CD14-positive monocyte (primary cell): ENCODE measurements at regions of chr12 and their contacts with region 1.

Region 1: DNA sequence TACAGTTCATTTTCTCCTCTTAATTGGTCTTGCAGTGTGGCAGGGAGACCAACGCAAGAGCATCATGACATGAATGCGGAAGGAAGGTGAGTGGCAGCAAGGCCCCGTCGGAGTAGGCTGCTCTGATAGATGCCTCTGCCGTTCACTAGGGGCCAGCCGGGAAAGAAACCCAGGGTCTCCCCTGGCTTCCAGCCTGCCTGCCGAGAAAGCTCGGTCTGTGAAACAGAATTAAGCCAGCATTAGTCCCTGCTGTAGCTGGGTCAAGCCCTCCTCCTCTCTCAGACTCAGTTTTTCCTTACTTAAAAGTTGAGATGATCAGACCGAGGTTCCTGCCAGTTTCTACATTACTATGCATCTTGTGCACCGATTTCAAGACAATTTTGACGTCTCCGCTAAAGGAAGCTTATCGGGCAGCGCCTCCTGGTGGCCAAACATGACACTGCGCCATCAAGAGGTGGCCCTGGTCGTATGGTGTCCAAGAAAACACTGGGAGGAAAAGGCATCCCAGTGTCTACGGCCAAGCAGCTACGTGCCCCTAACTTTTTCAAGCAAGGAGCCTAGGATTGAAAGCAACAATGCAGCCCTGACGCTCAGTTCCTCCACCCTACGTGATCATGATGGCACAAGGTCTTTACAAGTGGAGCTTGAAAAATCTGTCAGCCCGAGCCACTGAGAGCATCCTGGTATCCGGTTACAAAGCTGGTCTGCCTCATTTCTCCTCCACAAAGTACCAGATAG is 131.6 kb downstream of the KSR2 start:
- DNase-seq: peak; percentile 18 to 50 (median 48)
- H3K4me3 ChIP-seq: no peak overlapping the region
- H3K4me3 Mint-ChIP-seq: no peak overlapping the region
- H3K27ac ChIP-seq: no peak overlapping the region
- H3K27ac Mint-ChIP-seq: no peak overlapping the region
- H3K4me1 ChIP-seq: no peaks in the 10 kb centered on the region
- H3K4me1 Mint-ChIP-seq: peaks cover 2% of the 10 kb centered on the region
- H3K27me3 ChIP-seq: no peaks in the 10 kb centered on the region
- H3K27me3 Mint-ChIP-seq: peaks cover 0 to 7% (median 2%) of the 10 kb centered on the region in 3 donors
- CTCF ChIP-seq: peak; percentile 96

Region 2: GRCh38 chr12:117212563-117213190 is 624.5 kb before region 1 on chr12:
- intact Hi-C with region 1: loop called (anchors 5 kb)
- DNase-seq: peak; percentile 17 to 49 (median 32)
- H3K4me3 ChIP-seq: no peak overlapping the region
- H3K4me3 Mint-ChIP-seq: no peak overlapping the region
- H3K27ac ChIP-seq: no peak overlapping the region
- H3K27ac Mint-ChIP-seq: no peak overlapping the region
- H3K4me1 ChIP-seq: no peaks in the 10 kb centered on the region
- H3K4me1 Mint-ChIP-seq: no peaks in the 10 kb centered on the region
- H3K27me3 ChIP-seq: no peaks in the 10 kb centered on the region
- H3K27me3 Mint-ChIP-seq: peaks cover 6 to 17% (median 11%) of the 10 kb centered on the region in 3 donors
- CTCF ChIP-seq: peak; percentile 76

Region 3: GRCh38 chr12:117236456-117237001 is 600.6 kb before region 1 on chr12:
- intact Hi-C with region 1: loop called in 1 of 2 experiments (anchors 5 kb)
- DNase-seq: peak; percentile 12 to 36 (median 33)
- H3K4me3 ChIP-seq: no peak overlapping the region
- H3K4me3 Mint-ChIP-seq: no peak overlapping the region
- H3K27ac ChIP-seq: no peak overlapping the region
- H3K27ac Mint-ChIP-seq: no peak overlapping the region
- H3K4me1 ChIP-seq: no peaks in the 10 kb centered on the region
- H3K4me1 Mint-ChIP-seq: no peaks in the 10 kb centered on the region
- H3K27me3 ChIP-seq: no peaks in the 10 kb centered on the region
- H3K27me3 Mint-ChIP-seq: peaks cover 4 to 11% (median 10%) of the 10 kb centered on the region in 3 donors
- CTCF ChIP-seq: peak; percentile 86

Region 4: GRCh38 chr12:117367011-117367638 is 470.0 kb before region 1 on chr12:
- intact Hi-C with region 1: loop called (anchors 2 kb)
- DNase-seq: peak; percentile 30 to 59 (median 52)
- H3K4me3 ChIP-seq: no peak overlapping the region
- H3K4me3 Mint-ChIP-seq: no peak overlapping the region
- H3K27ac ChIP-seq: no peak overlapping the region
- H3K27ac Mint-ChIP-seq: no peak overlapping the region
- H3K4me1 ChIP-seq: no peaks in the 10 kb centered on the region
- H3K4me1 Mint-ChIP-seq: peaks cover 8% of the 10 kb centered on the region
- H3K27me3 ChIP-seq: peaks cover 5 to 25% of the 10 kb centered on the region in 2 donors
- H3K27me3 Mint-ChIP-seq: peaks cover 29 to 42% (median 29%) of the 10 kb centered on the region in 3 donors
- CTCF ChIP-seq: peak; percentile 95

Region 5: GRCh38 chr12:117408161-117408791 is 428.9 kb before region 1 on chr12:
- intact Hi-C with region 1: no loop called
- DNase-seq: no peak
- H3K4me3 ChIP-seq: no peak overlapping the region
- H3K4me3 Mint-ChIP-seq: peak overlapping the region in 1 of 2 donors; percentile 44
- H3K27ac ChIP-seq: no peak overlapping the region
- H3K27ac Mint-ChIP-seq: no peak overlapping the region
- H3K4me1 ChIP-seq: peaks cover 3 to 11% of the 10 kb centered on the region in 2 donors
- H3K4me1 Mint-ChIP-seq: peaks cover 13% of the 10 kb centered on the region
- H3K27me3 ChIP-seq: no peaks in the 10 kb centered on the region
- H3K27me3 Mint-ChIP-seq: peaks cover 2 to 11% (median 10%) of the 10 kb centered on the region in 3 donors
- CTCF ChIP-seq: no peak

Region 6: GRCh38 chr12:117466677-117467362 is 370.3 kb before region 1 on chr12:
- intact Hi-C with region 1: no loop called
- DNase-seq: no peak
- H3K4me3 ChIP-seq: no peak overlapping the region
- H3K4me3 Mint-ChIP-seq: no peak overlapping the region
- H3K27ac ChIP-seq: no peak overlapping the region
- H3K27ac Mint-ChIP-seq: no peak overlapping the region
- H3K4me1 ChIP-seq: no peaks in the 10 kb centered on the region
- H3K4me1 Mint-ChIP-seq: no peaks in the 10 kb centered on the region
- H3K27me3 ChIP-seq: no peaks in the 10 kb centered on the region
- H3K27me3 Mint-ChIP-seq: peaks cover 5 to 10% (median 8%) of the 10 kb centered on the region in 3 donors
- CTCF ChIP-seq: no peak